SK-N-SH (cell line): ENCODE measurements at regions of chr18 and their contacts with region 1.

Region 1: DNA sequence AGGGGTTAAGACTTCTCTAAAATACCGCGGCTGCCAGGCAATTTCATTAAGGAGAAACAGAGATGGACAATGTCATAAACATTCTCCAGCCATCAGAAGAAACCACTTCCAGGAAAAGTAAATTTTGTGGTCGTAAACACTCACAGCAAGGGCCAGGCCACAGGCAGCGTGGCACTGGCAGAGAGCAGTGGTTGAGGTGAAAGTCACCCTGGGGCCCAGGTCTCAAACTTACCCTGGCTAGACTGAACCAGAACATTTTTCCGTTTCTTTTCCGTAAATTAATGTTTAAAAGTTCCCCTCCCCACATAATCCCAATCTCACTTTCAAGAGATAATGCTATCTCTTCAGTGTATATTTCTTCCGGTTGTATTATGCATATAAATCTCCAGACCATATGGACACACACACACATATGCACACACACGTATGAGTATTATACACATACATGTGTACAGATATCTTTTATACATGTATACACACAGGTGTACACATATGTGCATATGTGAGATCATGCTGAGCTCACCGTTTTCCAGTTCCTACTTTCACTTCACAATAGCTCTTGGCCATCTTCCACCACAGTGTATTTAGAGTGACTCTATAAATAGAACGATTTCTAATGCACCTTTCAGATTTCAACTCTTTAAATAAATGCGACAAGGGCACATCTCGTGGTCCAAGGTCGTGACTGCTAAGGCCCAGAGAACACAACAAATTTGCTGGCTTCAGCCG is 90.1 kb downstream of the MALT1 start:
- DNase-seq: no peak
- H3K4me3 ChIP-seq: no peak overlapping the region
- H3K27ac ChIP-seq: no peak overlapping the region
- H3K4me1 ChIP-seq: no peaks in the 10 kb centered on the region
- H3K27me3 ChIP-seq: no peaks in the 10 kb centered on the region
- CTCF ChIP-seq: no peak
- EP300 ChIP-seq: no peak
- RAD21 ChIP-seq: no peak

Region 2: DNA sequence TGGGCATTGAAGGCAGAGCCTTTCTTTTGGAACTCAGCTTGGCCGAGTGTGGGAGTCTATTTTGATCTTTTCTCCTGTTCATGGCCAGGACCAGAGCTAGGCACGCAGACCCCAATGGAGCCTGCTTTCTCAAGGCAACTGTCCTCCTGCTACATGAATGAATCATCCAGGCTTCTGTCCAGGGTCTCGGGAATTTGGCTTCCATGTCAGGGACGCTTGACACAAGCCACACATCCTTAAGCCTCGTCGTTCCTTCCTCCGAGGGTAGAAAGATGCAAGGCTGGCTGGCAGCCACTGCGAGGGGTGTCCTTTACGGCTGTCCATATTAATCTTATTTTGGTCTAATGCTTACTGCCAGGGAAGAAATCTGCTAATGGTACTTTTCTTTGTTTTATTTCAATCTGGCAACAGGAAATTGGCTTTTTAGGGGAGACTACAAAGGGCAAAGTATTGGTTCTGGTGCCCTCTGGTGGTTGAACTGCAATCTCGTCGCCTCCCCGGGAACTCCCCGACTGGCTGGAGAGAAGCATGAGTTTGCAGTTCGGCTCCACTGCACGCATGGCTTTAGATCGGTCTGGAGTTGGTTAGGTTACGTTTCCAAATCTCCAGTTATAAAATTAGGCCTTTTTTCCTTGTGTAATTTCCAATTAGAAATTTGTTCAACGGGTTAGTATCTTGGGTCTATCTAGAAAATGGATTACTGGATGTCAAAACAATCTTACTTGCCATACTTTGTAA is 267.7 kb before region 1 on chr18:
- CTCF ChIA-PET with region 1: interaction called, 20 read pairs
- POLR2A ChIA-PET with region 1: no interaction called
- DNase-seq: peak; percentile 74
- H3K4me3 ChIP-seq: peak overlapping the region in 1 of 2 experiments; percentile 13; a peak in 1 of 4 replicates
- H3K27ac ChIP-seq: no peak overlapping the region
- H3K4me1 ChIP-seq: peaks cover 0 to 4% of the 10 kb centered on the region in 2 experiments; a peak in 1 of 4 replicates
- H3K27me3 ChIP-seq: no peaks in the 10 kb centered on the region
- CTCF ChIP-seq: peak; percentile 94
- EP300 ChIP-seq: no peak
- RAD21 ChIP-seq: peak; percentile 88

Region 3: GRCh38 chr18:58541789-58542425 is 219.5 kb before region 1 on chr18:
- CTCF ChIA-PET with region 1: interaction called, 26 read pairs
- POLR2A ChIA-PET with region 1: no interaction called
- DNase-seq: no peak
- H3K4me3 ChIP-seq: no peak overlapping the region
- H3K27ac ChIP-seq: peak overlapping the region; percentile 28 to 87; a peak in 3 of 4 replicates
- H3K4me1 ChIP-seq: peaks cover 0 to 7% of the 10 kb centered on the region in 2 experiments; a peak in 2 of 4 replicates
- H3K27me3 ChIP-seq: no peaks in the 10 kb centered on the region
- CTCF ChIP-seq: no peak
- EP300 ChIP-seq: peak in 1 of 2 experiments; percentile 37; a peak in 1 of 4 replicates
- RAD21 ChIP-seq: no peak

Region 4: GRCh38 chr18:58549738-58550339 is 211.6 kb before region 1 on chr18:
- CTCF ChIA-PET with region 1: interaction called, 22 read pairs
- POLR2A ChIA-PET with region 1: no interaction called
- DNase-seq: no peak
- H3K4me3 ChIP-seq: no peak overlapping the region
- H3K27ac ChIP-seq: no peak overlapping the region
- H3K4me1 ChIP-seq: no peaks in the 10 kb centered on the region; a peak in 1 of 4 replicates
- H3K27me3 ChIP-seq: no peaks in the 10 kb centered on the region
- CTCF ChIP-seq: no peak
- EP300 ChIP-seq: no peak
- RAD21 ChIP-seq: no peak

Region 5: DNA sequence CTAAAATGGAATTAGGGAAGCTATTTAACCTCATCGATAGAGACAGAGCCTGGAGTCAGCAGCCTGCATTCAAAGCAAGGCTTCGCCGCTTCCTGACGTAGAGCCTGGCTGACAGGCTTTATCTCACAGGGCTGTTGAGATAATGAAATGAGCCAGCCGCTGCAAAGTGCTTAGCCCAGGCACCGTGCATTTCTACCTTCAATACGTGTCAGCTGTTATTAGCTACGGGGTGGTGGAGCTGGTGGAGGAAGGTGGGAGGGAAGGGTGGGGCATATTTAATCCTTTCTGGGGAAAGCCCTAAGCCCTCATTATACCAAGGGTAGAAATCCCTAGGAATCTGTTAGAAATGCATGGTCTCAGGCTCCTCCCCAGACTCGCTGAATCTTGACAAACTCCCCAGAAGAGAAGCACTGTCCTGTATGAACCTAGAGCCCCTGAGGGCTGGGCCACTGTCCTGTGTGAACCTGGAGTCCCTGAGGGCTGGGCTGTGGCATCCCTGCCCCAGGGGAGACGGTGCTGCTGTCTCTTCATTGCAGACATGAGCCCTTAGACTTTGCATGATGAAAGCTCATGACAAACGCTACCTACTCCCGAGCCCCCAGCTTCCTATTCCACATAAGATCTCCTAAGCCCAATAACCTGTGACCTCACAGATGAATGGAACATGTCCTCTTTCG is 204.9 kb before region 1 on chr18:
- CTCF ChIA-PET with region 1: interaction called, 22 read pairs
- POLR2A ChIA-PET with region 1: no interaction called
- DNase-seq: peak; percentile 69
- H3K4me3 ChIP-seq: no peak overlapping the region
- H3K27ac ChIP-seq: no peak overlapping the region
- H3K4me1 ChIP-seq: peaks cover 0 to 8% of the 10 kb centered on the region in 2 experiments; a peak in 1 of 4 replicates
- H3K27me3 ChIP-seq: no peaks in the 10 kb centered on the region
- CTCF ChIP-seq: no peak
- EP300 ChIP-seq: peak in 1 of 2 experiments; percentile 29; a peak in 2 of 4 replicates
- RAD21 ChIP-seq: peak; percentile 5; the same call in 1 of the 2 replicates

Region 6: GRCh38 chr18:58748899-58749595 is 12.4 kb before region 1 on chr18:
- CTCF ChIA-PET with region 1: interaction called, 59 read pairs
- POLR2A ChIA-PET with region 1: no interaction called
- DNase-seq: no peak
- H3K4me3 ChIP-seq: no peak overlapping the region
- H3K27ac ChIP-seq: no peak overlapping the region
- H3K4me1 ChIP-seq: no peaks in the 10 kb centered on the region
- H3K27me3 ChIP-seq: no peaks in the 10 kb centered on the region
- CTCF ChIP-seq: no peak
- EP300 ChIP-seq: no peak
- RAD21 ChIP-seq: no peak

Region 7: DNA sequence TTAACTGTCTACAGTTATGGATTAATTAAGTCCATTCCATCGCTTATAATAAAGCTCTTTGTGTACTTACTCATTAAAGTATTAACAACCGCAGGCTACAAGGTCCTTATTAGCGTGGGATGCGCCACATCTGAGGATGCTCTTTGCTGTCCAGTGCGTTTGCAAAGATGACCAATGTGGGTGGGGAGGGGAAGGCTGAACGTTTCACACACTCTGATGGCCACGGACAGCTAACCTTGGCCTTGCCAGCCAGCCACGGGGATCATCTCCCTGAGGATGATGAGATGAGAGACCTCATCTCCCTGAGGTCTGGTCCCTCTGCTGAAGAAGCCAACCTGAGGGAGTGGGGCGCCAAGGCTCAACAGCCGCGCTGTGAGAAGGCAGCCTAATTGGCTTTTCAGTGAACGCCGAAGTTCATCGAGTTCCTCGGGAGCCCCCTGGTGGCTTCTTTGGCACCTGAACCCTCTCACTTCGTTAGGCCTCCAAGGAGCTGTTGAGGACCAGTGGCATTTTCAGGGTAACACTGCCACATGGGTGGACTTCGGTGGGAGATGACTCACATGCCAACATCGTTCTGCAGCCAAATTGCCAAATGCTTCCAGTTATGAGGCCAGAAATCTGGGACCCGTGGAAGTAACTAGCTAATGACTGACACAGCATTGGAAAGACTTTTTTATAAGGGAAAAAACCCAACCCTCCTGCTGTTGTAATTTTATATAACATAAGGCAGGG is 308.9 kb after region 1 on chr18:
- CTCF ChIA-PET with region 1: interaction called, 215 read pairs
- POLR2A ChIA-PET with region 1: no interaction called
- DNase-seq: peak; percentile 75
- H3K4me3 ChIP-seq: peak overlapping the region in 1 of 2 experiments; percentile 17; a peak in 1 of 4 replicates
- H3K27ac ChIP-seq: no peak overlapping the region
- H3K4me1 ChIP-seq: peaks cover 0 to 2% of the 10 kb centered on the region in 2 experiments; a peak in 1 of 4 replicates
- H3K27me3 ChIP-seq: no peaks in the 10 kb centered on the region
- CTCF ChIP-seq: peak; percentile 89
- EP300 ChIP-seq: no peak
- RAD21 ChIP-seq: peak; percentile 87